CD8-positive, alpha-beta memory T cell (primary cell): ENCODE measurements at regions of chr10 and their contacts with region 1.

Region 1: GRCh38 chr10:87861953-87862678 is 1.2 kb downstream of the KLLN start:
- DNase-seq: peak; percentile 88 to 95 (median 92)
- H3K4me3 ChIP-seq: peak overlapping the region; percentile 91
- H3K4me3 Mint-ChIP-seq: peak overlapping the region; percentile 94 to 100 (median 97)
- H3K27ac ChIP-seq: peak overlapping the region; percentile 74
- H3K27ac Mint-ChIP-seq: peak overlapping the region; percentile 87 to 96 (median 95)
- H3K4me1 ChIP-seq: peaks cover 13% of the 10 kb centered on the region
- H3K4me1 Mint-ChIP-seq: peaks cover 33 to 48% (median 45%) of the 10 kb centered on the region in 3 donors
- H3K27me3 ChIP-seq: no peaks in the 10 kb centered on the region
- H3K27me3 Mint-ChIP-seq: peaks cover 0 to 4% of the 10 kb centered on the region in 2 donors

Region 2: DNA sequence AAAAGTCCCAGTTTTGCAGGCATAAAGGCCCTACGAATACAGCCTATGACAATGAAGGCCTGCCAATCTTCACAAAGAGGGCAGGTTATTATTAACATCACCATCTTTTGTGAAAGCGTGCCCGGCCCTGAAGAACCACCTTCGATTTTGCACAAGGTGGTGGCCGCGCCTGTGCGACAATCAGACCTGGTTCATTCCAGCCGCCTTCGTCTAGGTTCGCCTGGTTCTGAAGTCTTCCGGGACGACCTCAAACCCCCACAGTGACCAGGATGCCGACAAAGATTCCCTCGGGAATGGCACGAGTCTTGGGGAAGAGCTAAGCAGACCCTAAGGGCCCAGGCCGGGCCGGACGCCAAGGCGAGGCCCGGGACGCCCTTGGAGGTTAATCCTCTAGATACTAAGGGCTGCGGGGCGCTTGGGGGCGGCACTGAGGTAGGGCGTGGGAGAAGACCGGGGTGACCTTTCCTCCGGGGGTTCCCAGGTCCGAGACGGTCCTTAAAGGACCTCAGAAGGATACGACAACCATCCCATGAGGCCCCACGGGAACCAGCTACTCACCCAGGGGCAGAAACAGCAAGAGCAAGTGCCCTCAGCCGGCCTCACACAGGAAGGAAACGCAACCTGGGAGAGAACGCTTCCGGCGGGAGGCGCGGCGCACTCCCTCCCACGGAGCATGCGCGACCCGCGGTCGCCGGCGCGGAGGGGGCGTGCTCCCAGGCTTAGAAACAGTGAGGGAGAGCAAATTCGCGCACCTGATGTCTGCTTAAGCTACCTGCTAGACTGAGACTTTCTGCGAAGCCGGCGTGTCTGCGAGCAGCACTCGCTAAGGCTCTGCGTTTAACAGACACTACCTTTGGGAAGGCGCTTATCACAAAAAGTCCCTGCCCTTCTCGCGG is 44.3 kb before region 1 on chr10 and contains the start of gene ATAD1:
- CTCF ChIA-PET with region 1: interaction called, 24 read pairs
- POLR2A ChIA-PET with region 1: interaction called, 35 read pairs
- DNase-seq: peak; percentile 82 to 93 (median 90)
- H3K4me3 ChIP-seq: peak within 1 kb of the TSS; percentile 70
- H3K4me3 Mint-ChIP-seq: peak within 1 kb of the TSS; percentile 87 to 99 (median 94)
- H3K27ac ChIP-seq: peak within 1 kb of the TSS; percentile 86
- H3K27ac Mint-ChIP-seq: peak within 1 kb of the TSS; percentile 95 to 100 (median 99)
- H3K4me1 ChIP-seq: peaks cover 39% of the 10 kb centered on the region
- H3K4me1 Mint-ChIP-seq: peaks cover 41 to 52% (median 48%) of the 10 kb centered on the region in 3 donors
- H3K27me3 ChIP-seq: no peaks in the 10 kb centered on the region
- H3K27me3 Mint-ChIP-seq: peaks cover 2 to 3% of the 10 kb centered on the region in 2 donors
- total RNA-seq, gene ATAD1: 60.7 to 62.3 TPM

Region 3: DNA sequence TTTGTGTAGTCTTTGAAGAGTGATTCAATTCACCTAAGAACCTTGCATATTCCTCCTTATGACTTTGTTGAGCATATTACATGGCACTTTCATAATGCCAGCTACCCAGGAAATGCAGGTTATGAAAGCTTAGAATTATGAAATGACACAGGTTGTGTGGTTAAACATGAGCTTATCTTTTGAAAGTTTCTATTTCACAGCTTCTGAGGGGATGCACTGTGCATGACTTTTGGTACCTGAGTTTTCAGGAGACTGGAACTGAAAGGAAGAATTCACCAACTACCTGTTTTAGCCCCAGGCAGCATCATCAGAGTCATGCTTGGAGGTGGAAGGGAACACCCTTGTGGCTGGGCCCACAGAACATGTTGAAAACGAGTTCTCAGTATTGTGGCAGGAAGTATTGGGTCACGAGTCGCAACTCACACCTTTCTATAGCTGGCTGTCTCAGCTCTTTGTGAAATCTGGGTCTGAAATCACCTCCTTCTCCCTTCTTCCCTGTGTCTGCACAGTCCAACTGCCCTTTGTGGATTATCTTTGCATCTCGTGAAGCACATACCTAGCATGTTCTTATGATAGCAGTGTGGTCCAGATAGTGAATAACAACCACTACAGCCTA is 229.5 kb after region 1 on chr10:
- CTCF ChIA-PET with region 1: interaction called, 15 read pairs
- POLR2A ChIA-PET with region 1: interaction called, 13 read pairs
- DNase-seq: peak; percentile 53 to 82 (median 74)
- H3K4me3 ChIP-seq: no peak overlapping the region
- H3K4me3 Mint-ChIP-seq: peak overlapping the region in 6 of 7 donors; percentile 33 to 79 (median 59)
- H3K27ac ChIP-seq: peak overlapping the region; percentile 21
- H3K27ac Mint-ChIP-seq: peak overlapping the region; percentile 84 to 98 (median 90)
- H3K4me1 ChIP-seq: peaks cover 42% of the 10 kb centered on the region
- H3K4me1 Mint-ChIP-seq: peaks cover 48 to 57% (median 51%) of the 10 kb centered on the region in 3 donors
- H3K27me3 ChIP-seq: no peaks in the 10 kb centered on the region
- H3K27me3 Mint-ChIP-seq: no peaks in the 10 kb centered on the region

Region 4: DNA sequence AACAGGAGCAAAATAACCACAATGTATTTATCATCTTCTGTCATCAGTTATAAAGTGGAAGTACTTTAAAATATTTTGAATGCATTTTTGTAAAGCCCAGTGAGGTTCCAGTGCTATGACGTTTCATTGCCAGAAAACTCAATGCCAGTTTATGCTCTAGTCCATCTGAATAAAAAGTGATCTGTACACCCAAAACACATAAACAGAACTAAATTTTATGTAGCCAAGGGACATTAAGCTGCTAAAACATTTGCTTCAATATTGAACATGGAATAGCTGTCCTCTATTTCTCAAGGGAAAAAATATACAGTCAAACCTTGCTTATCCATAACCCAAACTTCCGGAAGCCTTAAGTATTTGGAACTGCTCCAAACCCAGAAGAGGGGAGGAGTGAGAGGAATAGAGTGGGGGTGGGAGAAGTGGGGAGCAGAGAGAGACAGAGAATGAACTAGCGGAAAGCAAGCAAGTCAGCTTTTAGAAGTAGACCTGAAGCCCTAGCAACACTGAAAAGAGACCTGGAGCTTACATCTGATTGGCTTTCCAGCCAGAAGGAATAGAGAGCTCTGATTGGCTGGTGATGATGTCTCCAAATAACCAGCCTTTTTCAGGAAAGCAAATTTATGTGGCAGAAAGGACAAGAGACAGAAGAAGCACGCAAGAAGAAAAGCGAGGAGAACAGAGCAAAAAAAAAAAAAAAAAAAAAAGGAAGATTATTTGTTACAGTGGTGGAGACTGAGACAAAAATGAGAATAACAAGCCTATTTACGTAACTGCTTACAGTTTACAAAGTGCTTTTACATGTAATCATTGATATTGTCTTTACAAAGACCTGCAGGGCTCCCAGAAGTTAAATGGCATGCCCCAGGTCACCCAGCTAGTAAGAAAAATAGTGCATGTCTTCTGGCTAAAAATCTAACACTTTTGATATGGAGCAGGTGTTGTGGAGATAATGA is 525.0 kb after region 1 on chr10:
- CTCF ChIA-PET with region 1: interaction called, 106 read pairs
- POLR2A ChIA-PET with region 1: interaction called, 22 read pairs
- DNase-seq: peak in 1 of 5 donors; percentile 53
- H3K4me3 ChIP-seq: peak overlapping the region; percentile 51
- H3K4me3 Mint-ChIP-seq: peak overlapping the region in 1 of 7 donors; percentile 9
- H3K27ac ChIP-seq: no peak overlapping the region
- H3K27ac Mint-ChIP-seq: peak overlapping the region in 1 of 8 donors; percentile 95
- H3K4me1 ChIP-seq: peaks cover 71% of the 10 kb centered on the region
- H3K4me1 Mint-ChIP-seq: peaks cover 7 to 27% (median 15%) of the 10 kb centered on the region in 3 donors
- H3K27me3 ChIP-seq: no peaks in the 10 kb centered on the region
- H3K27me3 Mint-ChIP-seq: no peaks in the 10 kb centered on the region

Region 5: GRCh38 chr10:89053555-89053954 is 1191.4 kb after region 1 on chr10:
- CTCF ChIA-PET with region 1: no interaction called
- POLR2A ChIA-PET with region 1: interaction called, 11 read pairs
- DNase-seq: no peak
- H3K4me3 ChIP-seq: no peak overlapping the region
- H3K4me3 Mint-ChIP-seq: no peak overlapping the region
- H3K27ac ChIP-seq: no peak overlapping the region
- H3K27ac Mint-ChIP-seq: peak overlapping the region in 1 of 8 donors; percentile 52
- H3K4me1 ChIP-seq: no peaks in the 10 kb centered on the region
- H3K4me1 Mint-ChIP-seq: no peaks in the 10 kb centered on the region
- H3K27me3 ChIP-seq: no peaks in the 10 kb centered on the region
- H3K27me3 Mint-ChIP-seq: no peaks in the 10 kb centered on the region